ENCODE measurements at regions of chr17 and their contacts with region 1.

Region 1: DNA sequence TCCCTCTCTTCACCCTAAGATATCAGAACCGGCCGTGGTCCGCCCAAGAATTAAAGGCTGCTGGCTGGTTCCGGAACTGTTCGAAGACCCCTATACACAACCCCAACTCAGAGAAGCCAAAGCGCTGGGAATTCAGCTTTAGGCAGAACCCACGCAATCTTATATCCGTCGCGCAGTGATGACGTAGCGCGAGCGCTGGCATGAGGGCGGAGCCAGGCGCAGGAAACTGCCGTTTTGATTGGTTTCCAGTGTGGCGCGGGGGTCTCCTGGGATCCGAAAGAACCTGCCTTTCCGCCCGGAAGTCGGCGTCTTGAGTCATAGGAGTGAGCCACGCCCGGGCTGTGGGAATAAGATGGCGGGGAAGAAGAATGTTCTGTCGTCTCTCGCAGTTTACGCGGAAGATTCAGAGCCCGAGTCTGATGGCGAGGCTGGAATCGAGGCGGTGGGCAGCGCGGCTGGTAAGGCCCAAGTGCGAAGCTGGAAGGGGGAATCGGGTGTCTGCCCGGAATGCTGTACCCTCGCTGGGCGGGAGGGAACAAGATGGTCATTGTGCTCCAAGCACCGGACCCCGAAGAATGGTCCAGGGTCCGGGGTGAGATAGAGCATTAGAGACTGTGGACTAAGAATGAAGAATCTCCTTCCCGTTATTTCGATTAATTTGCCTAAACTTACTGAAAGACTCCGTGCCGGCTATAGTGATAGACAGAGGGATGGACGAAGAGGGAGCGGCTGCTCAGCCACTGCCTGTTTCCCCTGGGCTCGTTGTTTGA is at the starts of genes RECQL5 and SAP30BP:
- DNase-seq: peak; percentile 88 to 99
- H3K4me3 ChIP-seq: peak within 1 kb of the TSS; percentile 81 to 82
- H3K27ac ChIP-seq: peak within 1 kb of the TSS; percentile 80 to 96
- H3K4me1 ChIP-seq: peaks cover 10 to 16% of the 10 kb centered on the region in 2 donors
- H3K27me3 ChIP-seq: no peaks in the 10 kb centered on the region
- CTCF ChIP-seq: no peak
- total RNA-seq, gene RECQL5: 7.6 TPM
- total RNA-seq, gene SAP30BP: 70.9 TPM

Region 2: DNA sequence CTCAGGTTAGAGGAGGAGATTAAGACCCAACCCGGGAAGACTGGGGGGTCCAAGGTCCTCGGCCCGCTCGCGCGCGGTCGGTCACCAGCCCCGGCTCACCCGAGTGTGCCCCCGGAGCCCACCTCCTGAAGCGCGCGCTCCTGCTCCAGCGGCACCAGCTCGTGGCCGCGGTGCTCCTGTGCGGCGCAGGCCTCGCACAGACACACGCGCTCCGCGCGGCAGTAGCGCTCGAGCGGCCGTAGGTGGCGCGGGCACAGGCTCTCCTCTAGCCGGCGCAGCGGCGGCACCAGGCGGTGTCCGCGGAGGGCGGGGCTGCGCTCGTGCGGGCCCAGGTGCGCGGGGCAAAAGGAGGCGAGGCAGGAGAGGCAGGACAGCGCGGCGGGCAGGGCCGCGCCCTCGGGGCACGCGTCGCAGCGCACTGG is 210.6 kb after region 1 on chr17:
- intact Hi-C with region 1: loop called (anchors 10 kb)
- DNase-seq: peak in 1 of 2 donors; percentile 86
- H3K4me3 ChIP-seq: peak overlapping the region; percentile 85 to 96
- H3K27ac ChIP-seq: peak overlapping the region; percentile 96 to 99
- H3K4me1 ChIP-seq: peaks cover 33 to 45% of the 10 kb centered on the region in 2 donors
- H3K27me3 ChIP-seq: no peaks in the 10 kb centered on the region
- CTCF ChIP-seq: peak in 2 of 3 experiments; percentile 48 to 51

Measured in ascending aorta (tissue), 2 donors.